ENCODE measurements at regions of chr14 and their contacts with region 1.

Region 1: GRCh38 chr14:71956920-71957563 is 24.8 kb downstream of the RGS6 start:
- DNase-seq: peak; percentile 78
- ATAC-seq: peak; percentile 83
- H3K4me3 ChIP-seq: no peak overlapping the region
- H3K27ac ChIP-seq: peak overlapping the region; percentile 70
- H3K4me1 ChIP-seq: peaks cover 18% of the 10 kb centered on the region
- H3K27me3 ChIP-seq: no peaks in the 10 kb centered on the region
- CTCF ChIP-seq: no peak
- EP300 ChIP-seq: peak; percentile 88 to 99
- POLR2A ChIP-seq: no peak
- RAD21 ChIP-seq: no peak

Region 2: DNA sequence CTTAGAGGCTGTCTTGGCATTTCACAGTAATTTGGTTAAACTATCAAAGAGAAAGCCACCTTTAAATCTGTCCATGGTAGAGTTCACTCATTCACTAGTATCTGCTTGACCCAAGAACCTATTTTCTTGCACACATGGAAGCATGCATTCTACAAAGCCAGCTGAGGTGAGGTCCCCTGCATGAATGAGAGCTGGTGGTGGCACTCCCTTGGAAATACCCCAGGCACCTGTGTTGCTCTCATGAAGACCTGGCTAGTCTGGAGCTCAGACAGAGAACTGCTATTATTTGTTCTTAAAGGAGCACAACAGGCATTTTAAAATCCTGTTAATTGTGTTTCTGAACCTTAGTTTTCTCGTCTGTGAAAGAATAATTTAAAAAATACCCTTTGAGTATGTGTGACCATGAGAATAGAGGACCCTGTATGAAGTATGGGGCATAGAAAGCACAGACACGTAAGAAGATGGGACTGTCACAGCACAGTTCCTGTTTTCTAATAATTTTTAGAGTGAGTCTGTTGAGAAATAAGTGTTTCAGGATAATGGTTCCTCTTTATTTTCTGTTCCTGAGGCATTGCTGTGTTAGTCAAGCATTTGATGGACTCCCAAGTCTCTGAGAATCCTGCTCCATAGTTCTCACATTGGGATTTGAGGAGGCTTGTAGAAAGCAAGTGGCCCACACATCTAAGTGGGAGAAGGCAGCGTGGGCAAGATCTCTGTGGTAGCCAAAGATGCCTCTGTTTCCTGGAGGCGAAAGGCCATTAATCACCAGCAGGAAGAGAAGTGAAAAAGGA is 13.9 kb before region 1 on chr14:
- CTCF ChIA-PET with region 1: interaction called, 5 read pairs
- POLR2A ChIA-PET with region 1: interaction called, 9 read pairs
- RAD21 ChIA-PET with region 1: interaction called, 13 read pairs
- SMC1A ChIA-PET with region 1: interaction called, 25 read pairs
- in situ Hi-C with region 1: no loop called
- intact Hi-C with region 1: no loop called
- DNase-seq: peak; percentile 53
- ATAC-seq: peak; percentile 88
- H3K4me3 ChIP-seq: no peak overlapping the region; the same call in 1 of the 2 replicates
- H3K27ac ChIP-seq: peak overlapping the region; percentile 69
- H3K4me1 ChIP-seq: peaks cover 14% of the 10 kb centered on the region
- H3K27me3 ChIP-seq: no peaks in the 10 kb centered on the region
- CTCF ChIP-seq: no peak
- EP300 ChIP-seq: peak in 1 of 2 experiments; percentile 58; a peak in 2 of 4 replicates
- POLR2A ChIP-seq: no peak
- RAD21 ChIP-seq: no peak

Region 3: DNA sequence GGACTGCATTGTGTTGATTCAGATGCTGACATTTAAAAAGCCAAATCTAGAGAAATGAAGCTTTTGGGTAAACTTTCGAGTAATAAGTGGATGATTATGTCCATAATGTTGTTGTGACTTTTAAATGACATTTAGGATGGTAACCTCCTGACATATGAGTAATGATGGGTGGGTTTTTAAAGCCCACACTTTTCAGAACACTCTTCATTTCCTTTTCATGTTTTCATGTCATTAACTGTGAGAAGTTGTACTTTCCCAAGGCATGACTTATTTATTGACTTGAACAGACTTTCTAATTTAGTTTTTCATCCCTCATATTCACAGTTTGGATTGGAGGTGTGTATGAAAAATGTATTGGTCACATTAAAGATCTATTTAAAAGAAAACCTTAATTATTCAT is 10.7 kb after region 1 on chr14:
- CTCF ChIA-PET with region 1: interaction called, 4 read pairs
- POLR2A ChIA-PET with region 1: interaction called, 6 read pairs
- RAD21 ChIA-PET with region 1: interaction called, 14 read pairs
- SMC1A ChIA-PET with region 1: interaction called, 21 read pairs
- in situ Hi-C with region 1: no loop called
- intact Hi-C with region 1: no loop called
- DNase-seq: no peak
- ATAC-seq: peak; percentile 79
- H3K4me3 ChIP-seq: 0 out of 2 replicates have a peak overlapping the region, but pooled peaks have one; percentile 17
- H3K27ac ChIP-seq: peak overlapping the region; percentile 75
- H3K4me1 ChIP-seq: peaks cover 13% of the 10 kb centered on the region
- H3K27me3 ChIP-seq: no peaks in the 10 kb centered on the region
- CTCF ChIP-seq: no peak
- EP300 ChIP-seq: peak; percentile 54 to 62; a peak in 1 of 4 replicates
- POLR2A ChIP-seq: no peak
- RAD21 ChIP-seq: no peak

Measured in GM12878 (cell line).